Calu3 (cell line): ENCODE measurements at regions of chr5 and their contacts with region 1.

Region 1: DNA sequence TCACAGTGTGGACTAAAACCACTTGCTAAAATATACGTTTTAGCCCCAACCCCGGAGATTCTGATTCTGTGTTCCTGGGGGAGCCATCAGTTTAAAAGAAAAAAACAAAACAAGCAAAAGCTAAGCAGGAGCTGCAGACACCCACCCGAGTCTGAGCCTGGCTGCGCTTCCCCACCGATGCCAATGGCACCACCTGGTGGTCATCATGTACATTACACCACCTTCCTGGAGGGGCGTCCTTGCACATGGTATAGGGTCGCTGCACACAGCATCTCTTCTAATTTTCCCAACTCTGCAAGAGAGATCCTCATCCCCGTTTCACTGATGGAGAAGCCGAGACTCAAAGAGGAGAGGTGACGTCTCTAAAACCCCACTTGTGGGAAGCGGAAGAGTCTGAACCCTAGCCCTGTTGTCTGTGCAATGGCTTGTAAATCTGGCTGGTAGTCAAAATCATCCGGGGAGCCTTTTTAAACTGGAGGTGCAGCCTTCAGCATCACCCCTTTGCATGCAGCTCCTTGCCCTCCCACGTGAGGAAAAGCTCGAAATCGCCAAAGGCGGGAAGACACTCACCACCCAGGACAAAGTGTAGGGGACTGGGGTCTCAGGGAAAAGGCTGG is 23.1 kb upstream of the CNOT6 start:
- DNase-seq: peak; percentile 76
- H3K4me3 Mint-ChIP-seq: no peak overlapping the region
- H3K27ac Mint-ChIP-seq: no peak overlapping the region
- H3K4me1 Mint-ChIP-seq: peaks cover 41% of the 10 kb centered on the region
- H3K27me3 Mint-ChIP-seq: no peaks in the 10 kb centered on the region
- CTCF ChIP-seq: peak; percentile 97

Region 2: DNA sequence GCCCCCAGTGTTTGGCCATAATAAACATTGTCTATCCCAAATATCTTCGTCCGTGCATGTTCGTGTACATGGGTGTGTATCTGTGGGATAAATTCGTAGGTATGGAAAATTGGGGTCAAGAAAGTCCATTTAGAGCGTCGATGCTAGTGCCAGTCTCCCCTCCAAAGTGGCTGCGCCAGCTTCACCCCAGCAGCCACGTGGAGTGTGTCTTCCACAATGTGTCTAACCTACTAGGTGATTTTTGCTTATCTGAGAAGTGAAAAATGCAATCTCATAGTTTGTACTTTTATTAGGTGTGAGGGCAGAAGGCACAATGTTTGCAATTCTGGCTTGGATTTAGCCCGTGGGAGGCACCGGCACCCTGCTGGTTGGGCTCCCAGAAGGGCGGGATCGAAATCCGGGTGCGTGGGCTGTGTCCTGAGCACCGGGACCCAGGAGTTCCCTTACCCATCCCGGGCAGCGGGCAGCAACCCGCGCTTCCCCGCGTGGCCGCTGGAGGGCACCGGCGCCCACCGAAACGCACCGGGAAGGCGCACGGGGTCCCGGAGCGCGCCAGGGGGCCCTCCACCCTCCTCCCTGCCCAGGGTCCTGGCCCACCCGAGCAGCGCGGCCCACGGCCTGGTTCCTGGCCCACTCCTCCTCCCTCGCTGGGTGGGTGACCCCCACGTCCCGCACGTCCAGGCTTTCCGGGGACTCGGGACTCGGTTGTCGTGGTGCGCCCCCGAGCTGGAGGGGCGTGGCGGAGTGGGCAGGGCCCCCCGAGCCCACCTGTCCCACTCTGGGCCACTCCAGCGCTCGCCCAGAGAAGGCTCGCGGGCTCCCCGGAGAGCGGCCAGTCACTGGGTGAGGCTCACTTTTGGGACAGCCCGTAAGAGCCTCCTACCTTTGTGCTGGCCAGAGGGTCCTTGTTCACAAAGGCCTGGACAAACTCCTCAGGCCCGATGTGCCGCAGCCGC is 344.1 kb before region 1 on chr5:
- CTCF ChIA-PET with region 1: no interaction called
- intact Hi-C with region 1: loop called (anchors 5 kb)
- DNase-seq: peak; percentile 79
- H3K4me3 Mint-ChIP-seq: no peak overlapping the region
- H3K27ac Mint-ChIP-seq: no peak overlapping the region
- H3K4me1 Mint-ChIP-seq: peaks cover 23% of the 10 kb centered on the region
- H3K27me3 Mint-ChIP-seq: peaks cover 81% of the 10 kb centered on the region
- CTCF ChIP-seq: peak; percentile 93